ENCODE measurements at regions of chr11 and their contacts with region 1.

Region 1: DNA sequence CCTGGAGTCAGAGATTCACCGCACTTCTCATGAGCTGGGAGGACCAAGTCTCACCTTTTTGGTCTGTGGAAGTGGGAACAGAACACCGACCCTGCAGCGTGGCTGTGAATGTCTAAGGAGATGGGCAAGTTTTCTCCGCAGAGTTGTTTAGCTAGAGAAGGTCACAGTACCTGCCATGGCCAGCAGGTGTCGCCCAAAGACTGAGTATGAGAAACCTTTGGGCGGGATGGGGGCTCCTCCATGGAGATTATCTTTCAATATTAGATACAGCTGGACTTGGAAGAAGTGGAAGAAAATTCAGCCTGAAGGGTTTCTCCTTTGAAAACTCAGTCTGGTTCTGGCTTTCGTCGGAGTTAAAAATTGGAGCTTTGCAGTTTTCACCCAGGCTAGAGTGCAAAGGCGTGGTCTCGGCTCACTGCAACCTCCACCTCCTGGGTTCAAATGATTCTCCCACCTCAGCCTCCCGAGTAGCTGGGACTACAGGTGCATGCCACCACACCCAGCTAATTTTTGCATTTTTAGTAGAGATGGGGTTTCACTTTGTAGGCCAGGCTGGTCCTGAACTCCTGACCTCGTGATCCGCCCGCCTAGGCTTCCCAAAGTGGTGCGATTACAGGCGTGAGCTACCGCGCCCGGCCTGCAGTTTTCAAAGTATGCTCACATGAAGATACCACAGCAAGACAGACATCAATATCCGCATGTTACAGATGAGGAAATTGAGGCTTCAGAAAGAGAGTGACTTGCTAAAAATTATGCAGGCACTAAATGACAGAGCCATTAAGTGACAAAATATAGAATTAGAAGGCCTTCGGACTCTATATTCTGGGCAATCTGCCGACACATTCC is 10.7 kb upstream of the DSCAML1 start:
- DNase-seq: no peak

Region 2: DNA sequence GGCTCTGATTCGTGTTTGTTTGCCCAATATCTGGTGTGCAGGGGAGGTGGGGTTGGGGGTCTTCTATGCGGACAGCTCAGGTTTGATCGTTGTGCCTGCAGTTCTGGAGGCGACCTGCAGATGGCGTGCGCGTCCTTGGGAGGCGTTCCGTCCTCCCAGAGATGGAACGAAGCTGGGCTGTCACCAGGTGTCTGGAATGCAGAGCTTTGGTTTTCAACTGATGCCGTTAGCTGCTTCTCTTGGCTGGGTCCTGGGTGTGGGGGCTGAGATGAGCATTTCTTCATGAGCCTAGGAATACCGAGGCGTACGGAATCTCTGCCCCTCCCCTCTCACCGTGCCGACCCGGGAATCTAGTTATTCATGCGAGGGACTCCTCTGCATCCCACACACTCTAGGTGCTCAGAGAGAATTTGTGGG is 381.4 kb before region 1 on chr11:
- intact Hi-C with region 1: loop called (anchors 5 kb)
- DNase-seq: no peak

Region 3: GRCh38 chr11:117443266-117444195 is 364.2 kb before region 1 on chr11:
- intact Hi-C with region 1: loop called (anchors 2 kb)
- DNase-seq: no peak

Region 4: GRCh38 chr11:117634756-117635603 is 172.7 kb before region 1 on chr11:
- intact Hi-C with region 1: loop called (anchors 10 kb)
- DNase-seq: no peak